Cardiac septum (tissue), 1 donor: ENCODE measurements at regions of chr10 and their contacts with region 1.

Region 1: GRCh38 chr10:4307910-4308309 is 518.1 kb upstream of the AKR1E2 start:
- DNase-seq: no peak

Region 2: GRCh38 chr10:4260483-4261124 is 47.3 kb before region 1 on chr10:
- intact Hi-C with region 1: loop called (anchors 5 kb)
- DNase-seq: no peak